Left ventricle myocardium superior (tissue), 1 donor: ENCODE measurements at regions of chrX and their contacts with region 1.

Region 1: DNA sequence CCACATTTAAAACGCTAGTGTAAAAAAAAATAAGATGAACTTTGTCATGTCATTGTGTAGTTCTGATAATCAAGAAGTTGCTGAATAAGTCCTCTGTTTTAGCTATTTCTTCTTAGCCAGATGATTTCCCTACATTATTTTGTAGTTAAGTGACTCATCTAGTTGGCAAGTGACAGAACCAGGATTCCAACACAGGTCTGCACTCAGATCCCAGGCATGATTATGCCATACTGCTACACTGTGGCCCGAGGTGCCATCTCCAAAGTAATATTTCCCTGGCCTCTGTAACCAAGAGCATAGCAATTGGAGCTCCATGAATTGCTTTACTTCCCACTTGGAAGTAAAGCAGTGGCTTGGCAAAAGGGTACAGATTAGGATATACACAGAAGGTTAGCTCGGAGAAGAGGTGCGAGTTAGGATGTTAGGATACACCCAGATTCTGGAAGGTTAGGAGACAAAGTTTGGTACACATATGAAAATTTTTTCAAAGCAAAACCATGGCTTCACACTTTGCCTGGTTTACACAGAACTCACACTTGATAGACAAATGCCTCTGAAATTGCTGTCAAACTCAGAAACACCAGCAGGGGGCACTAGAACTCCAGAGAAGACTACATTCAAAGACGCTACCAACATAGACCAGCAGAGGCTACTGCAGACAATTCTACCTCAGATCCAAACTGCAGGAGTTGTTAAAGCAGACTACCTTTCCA is 41.4 kb downstream of the SRPX2 start:
- DNase-seq: no peak
- ATAC-seq: peak; percentile 72

Region 2: GRCh38 chrX:100512471-100512870 is 173.0 kb before region 1 on chrX:
- intact Hi-C with region 1: no loop called
- DNase-seq: no peak
- ATAC-seq: no peak

Region 3: GRCh38 chrX:100768679-100769338 is 83.4 kb after region 1 on chrX:
- intact Hi-C with region 1: loop called (anchors 5 kb)
- DNase-seq: peak; percentile 76
- ATAC-seq: peak; percentile 23

Region 4: DNA sequence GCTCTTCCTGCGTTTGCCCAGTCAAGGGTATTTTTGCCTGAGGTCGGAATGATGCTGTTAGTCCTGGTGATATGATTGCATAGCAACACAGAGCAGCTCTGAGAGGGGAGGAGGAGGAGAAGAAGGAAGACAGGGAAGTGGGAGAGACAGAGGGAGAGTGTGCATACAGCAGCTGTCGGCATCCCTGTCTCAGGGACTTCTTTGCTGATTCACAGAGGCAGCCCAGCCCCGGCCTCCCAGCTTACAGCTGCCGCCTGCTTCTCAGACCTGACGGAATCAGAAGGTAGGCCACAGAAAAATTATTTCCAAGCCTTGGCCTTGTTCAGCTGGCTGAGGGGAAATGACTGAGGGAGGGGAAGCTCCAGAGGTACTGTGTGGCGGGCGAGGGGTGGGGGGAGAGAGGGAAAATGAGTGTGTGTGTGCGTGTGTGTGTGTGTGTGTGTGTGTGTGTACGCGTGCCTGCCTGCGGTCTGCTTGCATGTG is 534.5 kb after region 1 on chrX:
- intact Hi-C with region 1: no loop called
- DNase-seq: no peak
- ATAC-seq: no peak